PC-3 (cell line): ENCODE measurements at regions of chr2 and their contacts with region 1.

Region 1: GRCh38 chr2:227106845-227107759 is 56.9 kb downstream of the COL4A4 start:
- DNase-seq: peak; percentile 81
- ATAC-seq: peak; percentile 97
- H3K4me3 ChIP-seq: peak overlapping the region; percentile 21; the same call in 1 of the 2 replicates
- H3K27ac ChIP-seq: no peak overlapping the region
- H3K4me1 ChIP-seq: no peaks in the 10 kb centered on the region
- H3K27me3 ChIP-seq: no peaks in the 10 kb centered on the region
- CTCF ChIP-seq: peak; percentile 93

Region 2: DNA sequence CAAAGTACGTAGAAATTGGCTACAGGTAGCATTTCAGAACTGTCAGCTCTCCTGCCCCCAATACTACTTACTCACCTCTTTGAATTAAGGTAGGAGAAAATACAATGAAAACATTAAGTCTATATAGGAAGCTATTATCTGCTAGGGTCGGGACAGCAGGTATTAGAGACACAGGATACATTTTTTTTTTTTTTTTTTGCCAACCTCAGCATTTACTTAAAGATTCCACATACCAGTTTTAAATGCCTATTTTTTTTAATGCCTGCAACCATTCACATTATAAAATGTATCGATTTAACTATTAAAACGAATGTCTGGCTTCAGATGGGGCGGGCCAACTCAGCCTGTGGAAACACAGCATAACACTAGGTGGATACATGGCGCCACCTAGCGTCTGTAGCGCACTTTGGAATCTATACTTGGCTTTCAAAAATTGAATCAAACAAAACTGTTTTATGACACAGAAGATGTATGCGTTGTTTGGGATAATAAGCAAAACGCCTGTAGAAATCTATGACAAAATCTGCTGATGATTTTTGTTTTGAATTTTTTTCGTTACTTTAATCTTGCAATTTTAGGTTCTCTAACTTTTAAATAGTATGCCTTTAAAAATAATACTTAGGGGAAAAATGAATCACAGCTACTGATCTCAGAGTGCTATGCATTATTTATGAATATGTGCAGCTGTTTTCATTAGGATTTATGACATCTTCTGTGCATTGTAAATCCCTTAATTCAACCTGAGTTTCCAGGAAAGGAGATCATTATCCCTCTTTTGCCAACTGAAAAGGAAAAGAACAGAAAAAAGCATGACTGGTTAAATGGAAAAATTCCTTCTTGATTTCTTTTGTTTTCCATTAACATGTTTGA is 1446.6 kb before region 1 on chr2:
- CTCF ChIA-PET with region 1: interaction called, 5 read pairs
- POLR2A ChIA-PET with region 1: interaction called, 3 read pairs
- intact Hi-C with region 1: loop called (anchors 1 kb)
- DNase-seq: peak; percentile 84
- ATAC-seq: peak; percentile 89
- H3K4me3 ChIP-seq: no peak overlapping the region
- H3K27ac ChIP-seq: no peak overlapping the region
- H3K4me1 ChIP-seq: no peaks in the 10 kb centered on the region
- H3K27me3 ChIP-seq: no peaks in the 10 kb centered on the region
- CTCF ChIP-seq: peak; percentile 92

Region 3: DNA sequence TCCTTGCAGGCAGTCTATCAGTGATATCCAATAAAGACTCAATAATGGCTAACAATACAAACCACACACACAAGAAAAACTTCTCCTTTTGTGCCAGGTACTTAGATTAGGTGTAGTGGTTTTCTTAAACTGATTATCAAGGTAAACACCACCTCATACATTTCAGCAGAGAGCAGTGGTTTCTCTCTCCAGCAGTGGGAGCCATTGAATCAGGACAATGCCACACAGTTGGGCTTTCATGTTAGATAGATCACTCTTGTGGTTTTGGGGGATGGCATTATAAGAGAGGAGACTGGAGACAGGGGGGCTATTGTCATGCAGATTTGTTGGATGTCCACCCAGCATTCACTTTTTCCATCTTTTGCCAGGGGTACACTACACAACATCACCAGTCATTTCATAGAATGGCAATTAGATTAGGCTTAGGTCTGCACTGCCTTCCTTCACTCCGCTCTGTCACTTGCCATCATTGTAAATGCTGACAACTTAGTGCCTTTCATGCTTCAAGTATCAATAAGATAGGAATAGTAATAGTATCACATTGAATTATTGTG is 293.9 kb before region 1 on chr2:
- CTCF ChIA-PET with region 1: no interaction called
- POLR2A ChIA-PET with region 1: no interaction called
- intact Hi-C with region 1: loop called (anchors 1 kb)
- DNase-seq: peak; percentile 55
- ATAC-seq: peak; percentile 81
- H3K4me3 ChIP-seq: no peak overlapping the region
- H3K27ac ChIP-seq: no peak overlapping the region
- H3K4me1 ChIP-seq: no peaks in the 10 kb centered on the region
- H3K27me3 ChIP-seq: no peaks in the 10 kb centered on the region
- CTCF ChIP-seq: peak; percentile 75

Region 4: GRCh38 chr2:226984750-226985582 is 122.1 kb before region 1 on chr2:
- CTCF ChIA-PET with region 1: no interaction called
- POLR2A ChIA-PET with region 1: no interaction called
- intact Hi-C with region 1: loop called (anchors 2 kb)
- DNase-seq: peak; percentile 75
- ATAC-seq: peak; percentile 83
- H3K4me3 ChIP-seq: no peak overlapping the region
- H3K27ac ChIP-seq: no peak overlapping the region
- H3K4me1 ChIP-seq: 0 out of 2 replicates have a peak, but pooled peaks cover 3% of the 10 kb centered on the region
- H3K27me3 ChIP-seq: no peaks in the 10 kb centered on the region
- CTCF ChIP-seq: peak; percentile 79

Region 5: DNA sequence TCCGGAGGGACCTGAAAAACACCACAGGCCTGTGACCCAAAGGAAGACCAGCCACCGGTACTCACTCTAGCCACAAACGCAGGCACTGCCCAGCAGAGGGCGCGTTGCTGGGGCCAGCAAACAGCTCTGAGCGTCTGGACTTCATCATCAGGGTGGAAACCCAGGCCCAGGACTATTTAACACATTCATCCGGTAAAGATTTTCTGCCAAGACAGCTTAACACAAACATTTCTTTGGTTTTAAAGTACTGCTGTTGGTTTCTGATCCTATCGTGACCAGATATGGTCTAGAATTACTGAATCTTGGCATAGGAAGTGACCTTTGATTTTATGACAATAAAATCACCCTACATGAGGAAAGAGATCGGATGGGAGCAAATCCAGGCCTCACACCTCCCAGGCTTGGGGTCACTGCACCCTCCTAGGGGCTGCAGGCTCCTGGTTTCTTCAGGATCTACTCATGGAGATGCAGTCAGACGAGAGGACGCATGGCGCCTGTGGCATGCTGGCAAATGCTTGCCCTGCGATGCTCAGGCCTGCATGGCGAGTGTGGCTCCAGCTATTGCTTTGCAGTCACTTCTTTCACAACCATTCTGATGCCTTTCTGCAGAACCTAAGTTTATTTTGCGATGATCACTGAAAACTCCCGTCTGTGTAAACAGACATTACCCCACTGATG is 73.5 kb before region 1 on chr2:
- CTCF ChIA-PET with region 1: interaction called, 7 read pairs
- POLR2A ChIA-PET with region 1: no interaction called
- intact Hi-C with region 1: loop called (anchors 1 kb)
- DNase-seq: peak; percentile 52
- ATAC-seq: peak; percentile 85
- H3K4me3 ChIP-seq: no peak overlapping the region
- H3K27ac ChIP-seq: no peak overlapping the region
- H3K4me1 ChIP-seq: no peaks in the 10 kb centered on the region
- H3K27me3 ChIP-seq: no peaks in the 10 kb centered on the region; the same call in 1 of the 2 replicates
- CTCF ChIP-seq: peak; percentile 86

Region 6: GRCh38 chr2:227163485-227163997 is 56.4 kb after region 1 on chr2:
- CTCF ChIA-PET with region 1: no interaction called
- POLR2A ChIA-PET with region 1: no interaction called
- intact Hi-C with region 1: no loop called
- DNase-seq: no peak
- ATAC-seq: peak; percentile 25
- H3K4me3 ChIP-seq: peak overlapping the region; percentile 82
- H3K27ac ChIP-seq: no peak overlapping the region
- H3K4me1 ChIP-seq: no peaks in the 10 kb centered on the region
- H3K27me3 ChIP-seq: 0 out of 2 replicates have a peak, but pooled peaks cover 5% of the 10 kb centered on the region
- CTCF ChIP-seq: no peak